Activated CD8-positive, alpha-beta T cell treated with anti-CD3 and anti-CD28 coated beads, Interleukin-2, amount 10 ng/mL, durations not matched to agents 7 days and 5 days (primary cell): ENCODE measurements at regions of chr17 and their contacts with region 1.

Region 1: GRCh38 chr17:60640503-60640902 is 37.1 kb upstream of the BCAS3 start:
- DNase-seq: no peak
- ATAC-seq: no peak
- H3K4me3 Mint-ChIP-seq: no peak overlapping the region
- H3K27ac Mint-ChIP-seq: no peak overlapping the region
- H3K4me1 Mint-ChIP-seq: no peaks in the 10 kb centered on the region
- H3K27me3 Mint-ChIP-seq: no peaks in the 10 kb centered on the region

Region 2: GRCh38 chr17:60573201-60574051 is 67.1 kb before region 1 on chr17:
- CTCF ChIA-PET with region 1: interaction called, 15 read pairs
- POLR2A ChIA-PET with region 1: no interaction called
- DNase-seq: no peak
- ATAC-seq: no peak
- H3K4me3 Mint-ChIP-seq: no peak overlapping the region
- H3K27ac Mint-ChIP-seq: no peak overlapping the region
- H3K4me1 Mint-ChIP-seq: peaks cover 9% of the 10 kb centered on the region
- H3K27me3 Mint-ChIP-seq: peaks cover 22% of the 10 kb centered on the region

Region 3: DNA sequence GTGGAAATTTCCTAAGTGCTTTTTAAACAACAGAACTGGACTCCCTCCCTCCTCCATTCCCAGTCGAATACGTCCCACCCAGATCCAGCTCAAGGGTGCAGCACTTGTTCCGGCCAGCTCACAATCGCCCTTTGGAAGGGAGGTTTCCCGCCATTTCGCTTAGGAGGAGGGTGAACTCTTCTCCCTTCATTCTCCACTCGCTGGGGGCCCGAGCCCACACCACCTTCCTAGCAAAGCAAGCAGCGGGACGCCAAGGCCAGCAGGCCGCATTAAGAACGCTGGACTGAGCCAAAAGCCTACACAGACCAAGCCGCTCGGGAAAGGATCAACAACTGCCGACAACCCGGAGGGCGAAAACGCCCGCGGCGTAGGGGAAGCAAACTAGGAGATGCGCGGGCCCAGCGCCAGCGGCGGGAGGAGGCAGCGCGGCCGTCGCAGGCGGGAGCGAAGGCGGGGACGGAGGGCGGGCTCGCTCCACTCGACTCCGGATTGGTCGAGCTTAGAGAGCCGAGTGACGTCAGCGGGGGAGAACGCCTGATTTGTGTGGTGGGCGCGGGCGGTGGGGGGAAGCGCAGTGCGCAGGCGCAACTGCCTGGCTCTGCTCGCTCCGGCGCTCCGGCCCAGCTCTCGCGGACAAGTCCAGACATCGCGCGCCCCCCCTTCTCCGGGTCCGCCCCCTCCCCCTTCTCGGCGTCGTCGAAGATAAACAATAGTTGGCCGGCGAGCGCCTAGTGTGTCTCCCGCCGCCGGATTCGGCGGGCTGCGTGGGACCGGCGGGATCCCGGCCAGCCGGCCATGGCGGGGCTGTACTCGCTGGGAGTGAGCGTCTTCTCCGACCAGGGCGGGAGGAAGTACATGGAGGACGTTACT is 40.6 kb before region 1 on chr17 and contains the start of gene PPM1D:
- CTCF ChIA-PET with region 1: interaction called, 21 read pairs
- POLR2A ChIA-PET with region 1: interaction called, 5 read pairs
- DNase-seq: peak; percentile 99
- ATAC-seq: peak; percentile 95
- H3K4me3 Mint-ChIP-seq: peak within 1 kb of the TSS; percentile 92
- H3K27ac Mint-ChIP-seq: peak within 1 kb of the TSS; percentile 96
- H3K4me1 Mint-ChIP-seq: peaks cover 39% of the 10 kb centered on the region
- H3K27me3 Mint-ChIP-seq: peaks cover 2% of the 10 kb centered on the region
- total RNA-seq, gene PPM1D: 20.4 to 21.2 TPM

Region 4: GRCh38 chr17:60622961-60623360 is 17.5 kb before region 1 on chr17:
- CTCF ChIA-PET with region 1: interaction called, 11 read pairs
- POLR2A ChIA-PET with region 1: no interaction called
- DNase-seq: no peak
- ATAC-seq: no peak
- H3K4me3 Mint-ChIP-seq: no peak overlapping the region
- H3K27ac Mint-ChIP-seq: no peak overlapping the region
- H3K4me1 Mint-ChIP-seq: no peaks in the 10 kb centered on the region
- H3K27me3 Mint-ChIP-seq: no peaks in the 10 kb centered on the region

Region 5: DNA sequence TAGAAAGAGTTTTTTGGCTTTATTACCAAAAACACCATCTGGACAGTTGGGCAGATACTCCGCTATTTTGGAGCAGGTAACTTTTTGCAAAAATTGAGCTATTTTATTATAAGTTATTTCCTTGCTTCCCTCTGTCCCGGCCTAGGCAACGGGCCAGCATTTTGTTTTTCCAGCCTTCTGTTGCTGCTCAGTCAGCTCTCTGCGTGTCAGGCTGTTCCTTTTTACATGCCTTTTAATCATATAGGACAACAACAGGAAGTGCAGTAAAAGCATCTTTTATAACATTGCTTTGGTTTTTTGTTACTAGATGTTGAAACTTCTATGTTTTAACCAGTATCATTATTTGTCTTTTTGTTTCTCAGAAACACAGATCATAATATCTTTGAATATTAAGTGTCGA is 10.2 kb before region 1 on chr17:
- CTCF ChIA-PET with region 1: interaction called, 20 read pairs
- POLR2A ChIA-PET with region 1: no interaction called
- DNase-seq: no peak
- ATAC-seq: no peak
- H3K4me3 Mint-ChIP-seq: no peak overlapping the region
- H3K27ac Mint-ChIP-seq: no peak overlapping the region
- H3K4me1 Mint-ChIP-seq: peaks cover 12% of the 10 kb centered on the region
- H3K27me3 Mint-ChIP-seq: no peaks in the 10 kb centered on the region

Region 6: DNA sequence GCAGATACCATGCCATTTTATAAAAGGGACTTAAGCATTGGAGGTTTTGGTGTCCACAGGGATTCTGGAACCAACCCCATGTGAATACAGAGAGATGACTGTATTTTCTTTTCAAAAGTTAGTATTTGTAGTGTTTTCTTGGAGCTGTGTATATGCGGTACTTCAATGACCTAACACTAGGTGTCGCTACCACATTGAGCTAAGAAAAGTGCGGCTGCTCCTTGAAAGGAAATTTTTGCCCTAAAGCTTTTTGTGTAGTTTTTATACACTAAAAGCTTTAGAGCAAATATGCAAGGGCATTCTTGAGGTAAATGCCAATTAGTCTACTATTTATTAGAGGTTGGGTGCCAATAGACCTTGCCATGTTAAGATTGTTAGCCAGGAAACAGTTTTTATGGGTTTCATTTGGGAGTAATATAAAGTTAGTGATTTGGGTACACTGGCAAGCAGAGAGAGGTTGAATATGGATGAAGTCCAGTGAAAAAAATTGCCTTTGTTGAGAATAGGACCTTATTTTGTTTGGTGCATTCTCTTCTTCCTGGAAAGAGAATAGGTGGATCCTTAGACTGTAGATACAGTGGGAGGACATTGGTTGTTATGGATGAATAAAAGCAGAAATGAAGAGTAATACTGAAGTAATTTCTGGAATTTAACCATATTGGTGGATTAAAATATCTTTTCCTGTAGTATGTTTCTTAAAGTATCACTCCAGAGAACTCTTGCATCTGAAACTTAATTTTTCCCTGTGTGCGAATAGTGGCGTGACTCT is 80.4 kb after region 1 on chr17:
- CTCF ChIA-PET with region 1: no interaction called
- POLR2A ChIA-PET with region 1: no interaction called
- DNase-seq: peak; percentile 60
- ATAC-seq: peak; percentile 51
- H3K4me3 Mint-ChIP-seq: no peak overlapping the region
- H3K27ac Mint-ChIP-seq: no peak overlapping the region
- H3K4me1 Mint-ChIP-seq: peaks cover 2% of the 10 kb centered on the region
- H3K27me3 Mint-ChIP-seq: no peaks in the 10 kb centered on the region

Region 7: GRCh38 chr17:60743799-60744198 is 103.3 kb after region 1 on chr17:
- CTCF ChIA-PET with region 1: no interaction called
- POLR2A ChIA-PET with region 1: no interaction called
- DNase-seq: no peak
- ATAC-seq: no peak
- H3K4me3 Mint-ChIP-seq: no peak overlapping the region
- H3K27ac Mint-ChIP-seq: no peak overlapping the region
- H3K4me1 Mint-ChIP-seq: no peaks in the 10 kb centered on the region
- H3K27me3 Mint-ChIP-seq: no peaks in the 10 kb centered on the region